PC-9 (cell line): ENCODE measurements at regions of chr15 and their contacts with region 1.

Region 1: DNA sequence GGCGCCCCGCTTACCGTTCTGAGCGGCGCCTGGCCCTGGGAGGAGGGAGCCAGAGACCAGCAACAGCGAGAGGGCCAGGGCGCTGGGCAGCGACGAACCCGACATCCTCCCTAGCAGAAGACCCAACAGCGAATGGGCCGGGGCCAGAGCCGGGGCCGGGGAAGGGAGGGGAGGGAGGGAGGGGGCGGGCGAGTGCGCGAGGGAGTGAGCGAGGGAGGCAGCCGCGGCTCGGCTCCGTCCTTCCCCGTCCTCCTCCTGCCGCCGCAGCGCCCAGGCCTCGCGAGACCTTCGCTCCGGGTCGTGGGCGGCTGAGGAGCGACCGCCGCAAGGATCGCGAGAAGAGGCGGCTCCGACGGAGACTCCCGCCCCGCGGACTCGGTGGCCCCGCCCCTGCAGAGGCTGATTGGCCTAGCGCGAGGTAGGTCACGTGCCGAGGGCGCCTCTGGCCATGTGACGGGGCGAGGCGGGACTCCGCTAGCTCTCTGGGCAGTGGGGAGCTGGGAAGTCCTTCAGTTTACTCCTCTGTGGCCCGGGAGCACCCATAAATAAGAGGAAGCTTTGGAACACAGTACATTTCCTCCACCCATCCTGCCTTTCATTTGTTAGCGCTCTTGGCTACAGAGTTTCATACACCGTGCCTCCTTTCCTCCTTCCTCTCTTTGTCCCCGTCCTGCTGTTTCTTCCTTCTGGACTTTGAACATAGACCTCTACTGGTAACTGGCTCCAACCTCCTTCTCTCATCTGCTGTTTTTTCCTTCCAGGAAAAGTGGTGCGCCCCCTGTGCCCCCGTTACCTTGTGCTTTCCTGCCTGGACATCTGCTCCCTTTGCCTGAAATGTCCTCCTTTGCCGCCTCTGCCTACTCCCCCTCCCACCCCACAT is at the start of gene NPTN:
- DNase-seq: peak; percentile 84 to 99
- H3K4me3 ChIP-seq: peak within 1 kb of the TSS; percentile 82
- H3K27ac ChIP-seq: peak within 1 kb of the TSS; percentile 96
- H3K4me1 ChIP-seq: peaks cover 55% of the 10 kb centered on the region
- H3K27me3 ChIP-seq: no peaks in the 10 kb centered on the region
- CTCF ChIP-seq: no peak
- total RNA-seq, gene NPTN: 61.8 and 101 TPM in 2 replicates

Region 2: GRCh38 chr15:73305331-73306211 is 327.8 kb before region 1 on chr15:
- CTCF ChIA-PET with region 1: no interaction called
- POLR2A ChIA-PET with region 1: no interaction called
- intact Hi-C with region 1: loop called (anchors 1 kb)
- DNase-seq: peak; percentile 39 to 51
- H3K4me3 ChIP-seq: no peak overlapping the region
- H3K27ac ChIP-seq: no peak overlapping the region
- H3K4me1 ChIP-seq: no peaks in the 10 kb centered on the region
- H3K27me3 ChIP-seq: no peaks in the 10 kb centered on the region
- CTCF ChIP-seq: peak; percentile 82

Region 3: GRCh38 chr15:73346735-73347312 is 286.5 kb before region 1 on chr15:
- CTCF ChIA-PET with region 1: no interaction called
- POLR2A ChIA-PET with region 1: no interaction called
- intact Hi-C with region 1: no loop called
- DNase-seq: peak; percentile 48 to 61
- H3K4me3 ChIP-seq: no peak overlapping the region
- H3K27ac ChIP-seq: no peak overlapping the region
- H3K4me1 ChIP-seq: no peaks in the 10 kb centered on the region
- H3K27me3 ChIP-seq: peaks cover 59% of the 10 kb centered on the region
- CTCF ChIP-seq: no peak

Region 4: DNA sequence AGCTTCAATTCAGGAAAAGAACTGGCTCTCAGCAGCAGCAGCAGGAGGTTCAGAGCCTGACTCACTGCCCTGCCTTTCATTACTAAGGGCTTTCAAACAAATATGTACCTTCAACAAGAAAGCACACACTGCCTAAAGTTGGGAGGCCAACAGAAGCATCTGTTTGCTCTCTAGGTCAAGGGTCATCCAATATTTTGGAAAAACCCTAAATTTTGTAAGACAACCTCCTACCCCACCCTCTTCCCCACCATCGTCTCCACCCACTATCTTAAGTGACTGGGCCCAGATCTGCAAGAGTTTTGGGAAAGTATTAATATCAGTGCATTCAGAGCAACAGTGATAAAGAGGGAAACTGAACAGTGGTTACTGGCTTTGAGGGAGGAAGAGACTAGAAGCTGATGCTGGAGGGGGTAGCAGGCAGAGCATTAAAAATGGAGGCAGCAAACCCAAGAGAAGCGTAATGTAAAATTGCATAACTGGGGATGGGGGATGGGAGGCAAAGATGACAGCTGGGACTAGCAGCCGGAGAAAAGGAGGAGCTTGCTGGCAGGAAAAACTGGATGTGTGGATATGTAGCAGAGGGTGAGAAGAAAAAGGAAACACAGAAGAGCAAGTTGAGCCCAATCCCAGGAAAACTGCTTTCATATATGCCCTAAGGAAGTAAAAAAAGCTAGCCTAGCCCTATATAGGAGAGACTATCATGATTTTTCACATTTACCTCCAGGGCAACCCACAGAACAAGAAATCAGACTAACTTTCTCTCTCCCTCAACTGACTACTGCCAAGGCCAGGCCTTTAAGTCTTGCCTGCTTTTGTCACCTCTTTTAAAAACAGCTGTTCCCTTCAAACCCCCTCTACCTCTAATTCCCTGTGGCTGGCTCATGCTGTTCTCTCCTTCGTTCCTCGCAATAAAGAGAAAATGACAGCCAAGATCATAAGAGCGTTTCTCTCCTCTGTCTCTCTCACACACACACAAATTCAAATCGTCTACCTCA is 31.6 kb before region 1 on chr15:
- CTCF ChIA-PET with region 1: no interaction called
- POLR2A ChIA-PET with region 1: no interaction called
- intact Hi-C with region 1: loop called (anchors 2 kb)
- DNase-seq: peak; percentile 39 to 59
- H3K4me3 ChIP-seq: no peak overlapping the region
- H3K27ac ChIP-seq: peak overlapping the region; percentile 70
- H3K4me1 ChIP-seq: peaks cover 42% of the 10 kb centered on the region
- H3K27me3 ChIP-seq: no peaks in the 10 kb centered on the region
- CTCF ChIP-seq: no peak

Region 5: GRCh38 chr15:73697033-73697467 is 63.7 kb after region 1 on chr15:
- CTCF ChIA-PET with region 1: interaction called, 36 read pairs
- POLR2A ChIA-PET with region 1: no interaction called
- intact Hi-C with region 1: loop called (anchors 1 kb)
- DNase-seq: peak in 1 of 2 experiments; percentile 60
- H3K4me3 ChIP-seq: no peak overlapping the region
- H3K27ac ChIP-seq: no peak overlapping the region
- H3K4me1 ChIP-seq: no peaks in the 10 kb centered on the region
- H3K27me3 ChIP-seq: no peaks in the 10 kb centered on the region
- CTCF ChIP-seq: no peak

Region 6: GRCh38 chr15:73794443-73795133 is 161.2 kb after region 1 on chr15:
- CTCF ChIA-PET with region 1: no interaction called
- POLR2A ChIA-PET with region 1: no interaction called
- intact Hi-C with region 1: no loop called
- DNase-seq: no peak
- H3K4me3 ChIP-seq: no peak overlapping the region
- H3K27ac ChIP-seq: no peak overlapping the region
- H3K4me1 ChIP-seq: no peaks in the 10 kb centered on the region
- H3K27me3 ChIP-seq: peaks cover 26% of the 10 kb centered on the region; the same call in 1 of the 2 replicates
- CTCF ChIP-seq: no peak

Region 7: GRCh38 chr15:73915079-73915478 is 281.7 kb after region 1 on chr15:
- CTCF ChIA-PET with region 1: no interaction called
- POLR2A ChIA-PET with region 1: no interaction called
- intact Hi-C with region 1: loop called (anchors 5 kb)
- DNase-seq: peak in 1 of 2 experiments; percentile 96
- H3K4me3 ChIP-seq: no peak overlapping the region
- H3K27ac ChIP-seq: peak overlapping the region; percentile 36; the same call in 1 of the 2 replicates
- H3K4me1 ChIP-seq: peaks cover 24% of the 10 kb centered on the region
- H3K27me3 ChIP-seq: no peaks in the 10 kb centered on the region
- CTCF ChIP-seq: no peak